Endothelial cell of umbilical vein (primary cell): ENCODE measurements at regions of chr19 and their contacts with region 1.

Region 1: GRCh38 chr19:55146078-55146704 is 2.8 kb downstream of the TNNT1 start:
- DNase-seq: no peak
- H3K4me3 ChIP-seq: no peak overlapping the region
- H3K27ac ChIP-seq: no peak overlapping the region
- H3K4me1 ChIP-seq: no peaks in the 10 kb centered on the region
- H3K27me3 ChIP-seq: peaks cover 7 to 15% of the 10 kb centered on the region in 2 experiments
- CTCF ChIP-seq: peak; percentile 34 to 55
- POLR2A ChIP-seq: no peak

Region 2: GRCh38 chr19:54905803-54906511 is 240.2 kb before region 1 on chr19 and contains the start of gene NCR1:
- CTCF ChIA-PET with region 1: no interaction called
- POLR2A ChIA-PET with region 1: no interaction called
- dilution Hi-C with region 1: no loop called
- intact Hi-C with region 1: no loop called
- DNase-seq: peak; percentile 37
- H3K4me3 ChIP-seq: no peak within 1 kb of the TSS
- H3K27ac ChIP-seq: no peak within 1 kb of the TSS
- H3K4me1 ChIP-seq: no peaks in the 10 kb centered on the region
- H3K27me3 ChIP-seq: no peaks in the 10 kb centered on the region
- CTCF ChIP-seq: no peak
- POLR2A ChIP-seq: no peak
- total RNA-seq, gene NCR1: 0.44 TPM in 1 of 2 replicates, not detected in the other

Region 3: GRCh38 chr19:55160128-55160985 is 14.2 kb after region 1 on chr19:
- CTCF ChIA-PET with region 1: interaction called, 64 read pairs
- POLR2A ChIA-PET with region 1: interaction called, 3 read pairs
- dilution Hi-C with region 1: no loop called
- intact Hi-C with region 1: loop called (anchors 1 kb)
- DNase-seq: peak; percentile 85
- H3K4me3 ChIP-seq: no peak overlapping the region
- H3K27ac ChIP-seq: no peak overlapping the region
- H3K4me1 ChIP-seq: no peaks in the 10 kb centered on the region
- H3K27me3 ChIP-seq: peaks cover 14 to 16% of the 10 kb centered on the region in 2 experiments
- CTCF ChIP-seq: peak; percentile 97 to 98
- POLR2A ChIP-seq: no peak

Region 4: DNA sequence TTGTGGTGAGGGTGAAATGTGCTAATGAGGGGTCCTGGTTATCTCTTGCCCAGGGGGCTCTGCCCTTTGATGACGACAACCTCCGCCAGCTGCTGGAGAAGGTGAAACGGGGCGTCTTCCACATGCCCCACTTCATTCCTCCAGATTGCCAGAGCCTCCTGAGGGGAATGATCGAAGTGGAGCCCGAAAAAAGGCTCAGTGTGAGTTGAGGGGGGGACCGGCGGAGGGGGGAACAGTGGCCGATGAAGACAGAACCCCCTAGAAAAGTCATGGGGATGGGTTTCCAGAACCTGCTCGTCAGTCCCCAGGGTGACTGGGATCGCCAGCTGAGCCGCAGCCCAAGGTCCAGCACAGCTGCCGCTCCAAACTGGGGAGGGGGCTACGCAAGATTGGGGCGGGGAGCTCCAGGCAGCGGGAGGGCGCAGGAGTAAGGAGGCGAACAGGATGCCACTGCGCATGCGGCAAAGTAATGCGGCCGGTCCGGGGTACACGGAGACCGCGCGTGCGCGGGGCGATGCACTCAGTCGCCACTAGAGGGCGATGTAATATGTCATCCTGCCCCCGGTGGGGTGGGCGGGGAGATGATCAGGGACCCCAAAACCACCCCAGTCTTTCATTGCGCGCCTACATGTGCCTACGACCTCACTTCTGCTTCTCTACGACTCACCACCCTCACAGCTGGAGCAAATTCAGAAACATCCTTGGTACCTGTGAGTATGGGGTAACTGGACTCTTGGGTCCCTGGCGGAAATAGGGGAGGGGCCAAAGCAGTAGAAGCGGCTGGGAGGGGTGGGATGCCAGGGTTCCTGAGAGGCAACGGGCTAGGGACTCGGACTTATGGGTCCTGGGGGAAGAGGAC is 155.5 kb after region 1 on chr19:
- CTCF ChIA-PET with region 1: interaction called, 8 read pairs
- POLR2A ChIA-PET with region 1: no interaction called
- dilution Hi-C with region 1: no loop called
- intact Hi-C with region 1: loop called (anchors 5 kb)
- DNase-seq: peak; percentile 81
- H3K4me3 ChIP-seq: peak overlapping the region in 2 of 3 experiments; percentile 26 to 28
- H3K27ac ChIP-seq: no peak overlapping the region
- H3K4me1 ChIP-seq: no peaks in the 10 kb centered on the region
- H3K27me3 ChIP-seq: peaks cover 0 to 3% of the 10 kb centered on the region in 2 experiments
- CTCF ChIP-seq: peak; percentile 89 to 95
- POLR2A ChIP-seq: no peak

Region 5: DNA sequence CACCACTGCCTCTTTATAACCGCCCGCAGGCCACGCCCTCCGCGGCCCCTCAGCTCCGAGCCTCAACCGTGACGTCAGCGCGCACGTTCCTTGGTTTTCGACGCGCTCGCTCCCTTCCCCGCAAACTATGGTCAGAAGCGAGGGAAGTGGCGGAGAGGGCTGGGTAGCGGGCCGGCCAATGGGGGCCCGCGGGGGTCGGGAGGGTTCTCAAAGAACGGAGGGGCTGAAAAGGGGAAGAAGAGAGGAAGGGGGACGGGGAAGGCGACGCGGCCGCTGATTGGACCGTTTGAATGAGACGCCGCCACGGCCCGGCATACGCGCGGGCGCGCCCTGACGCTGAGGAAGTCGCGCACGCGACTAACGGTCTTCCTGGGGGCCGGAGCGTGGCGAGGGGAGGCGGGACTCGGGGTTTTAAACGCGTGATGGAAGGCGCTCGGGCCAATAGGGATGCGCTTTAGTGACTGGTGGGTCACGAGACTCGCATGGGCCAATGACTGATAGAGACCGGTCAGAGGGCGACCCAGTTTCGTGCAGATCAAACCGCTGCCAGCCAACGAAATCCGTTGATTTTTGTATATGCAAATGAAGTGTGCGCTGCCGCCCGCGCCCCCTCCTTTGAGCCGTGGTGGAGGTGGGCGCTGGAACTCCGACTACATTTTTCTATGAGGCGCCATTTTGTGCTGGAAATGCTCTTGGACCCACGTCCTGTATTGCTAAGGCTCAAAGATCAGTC is 261.8 kb after region 1 on chr19:
- CTCF ChIA-PET with region 1: interaction called, 3 read pairs
- POLR2A ChIA-PET with region 1: no interaction called
- dilution Hi-C with region 1: no loop called
- intact Hi-C with region 1: loop called (anchors 2 kb)
- DNase-seq: peak; percentile 100
- H3K4me3 ChIP-seq: peak overlapping the region in 2 of 3 experiments; percentile 28 to 90
- H3K27ac ChIP-seq: peak overlapping the region; percentile 90
- H3K4me1 ChIP-seq: peaks cover 13% of the 10 kb centered on the region
- H3K27me3 ChIP-seq: peaks cover 2 to 5% of the 10 kb centered on the region in 2 experiments
- CTCF ChIP-seq: no peak
- POLR2A ChIP-seq: peak; percentile 58

Region 6: DNA sequence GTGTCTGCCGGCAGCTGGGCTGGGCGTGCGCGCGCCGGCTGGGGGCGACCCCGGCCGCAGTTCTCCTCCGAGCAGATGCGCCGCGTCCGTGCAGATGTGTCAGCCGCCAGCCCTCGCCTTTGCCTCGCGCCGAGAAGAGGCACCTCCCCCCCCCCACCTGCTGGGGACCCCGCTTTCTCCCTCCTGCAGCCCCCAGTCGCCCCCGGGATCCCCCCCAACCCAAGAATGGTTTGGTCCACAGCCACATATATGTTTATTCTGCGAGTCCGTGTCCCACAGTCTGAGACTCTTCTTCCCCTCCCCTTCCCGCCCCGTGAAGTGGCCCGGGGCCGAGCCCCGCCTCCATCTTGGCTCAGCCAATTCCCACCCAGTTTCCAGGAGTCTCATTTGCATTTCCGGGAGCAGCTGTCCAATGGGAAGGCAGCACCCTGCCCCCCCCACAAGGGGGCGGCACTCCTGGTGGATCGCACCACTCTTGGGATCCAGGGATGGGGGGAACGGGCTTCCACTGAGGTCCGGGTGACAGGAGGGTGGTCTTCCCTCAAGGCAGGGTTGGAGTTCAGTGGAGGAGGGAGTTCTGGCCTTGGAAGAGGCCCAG is 306.7 kb after region 1 on chr19:
- CTCF ChIA-PET with region 1: interaction called, 27 read pairs
- POLR2A ChIA-PET with region 1: no interaction called
- dilution Hi-C with region 1: no loop called
- intact Hi-C with region 1: loop called (anchors 1 kb)
- DNase-seq: peak; percentile 59
- H3K4me3 ChIP-seq: no peak overlapping the region
- H3K27ac ChIP-seq: no peak overlapping the region
- H3K4me1 ChIP-seq: no peaks in the 10 kb centered on the region
- H3K27me3 ChIP-seq: peaks cover 11 to 21% of the 10 kb centered on the region in 2 experiments
- CTCF ChIP-seq: no peak
- POLR2A ChIP-seq: no peak

Region 7: DNA sequence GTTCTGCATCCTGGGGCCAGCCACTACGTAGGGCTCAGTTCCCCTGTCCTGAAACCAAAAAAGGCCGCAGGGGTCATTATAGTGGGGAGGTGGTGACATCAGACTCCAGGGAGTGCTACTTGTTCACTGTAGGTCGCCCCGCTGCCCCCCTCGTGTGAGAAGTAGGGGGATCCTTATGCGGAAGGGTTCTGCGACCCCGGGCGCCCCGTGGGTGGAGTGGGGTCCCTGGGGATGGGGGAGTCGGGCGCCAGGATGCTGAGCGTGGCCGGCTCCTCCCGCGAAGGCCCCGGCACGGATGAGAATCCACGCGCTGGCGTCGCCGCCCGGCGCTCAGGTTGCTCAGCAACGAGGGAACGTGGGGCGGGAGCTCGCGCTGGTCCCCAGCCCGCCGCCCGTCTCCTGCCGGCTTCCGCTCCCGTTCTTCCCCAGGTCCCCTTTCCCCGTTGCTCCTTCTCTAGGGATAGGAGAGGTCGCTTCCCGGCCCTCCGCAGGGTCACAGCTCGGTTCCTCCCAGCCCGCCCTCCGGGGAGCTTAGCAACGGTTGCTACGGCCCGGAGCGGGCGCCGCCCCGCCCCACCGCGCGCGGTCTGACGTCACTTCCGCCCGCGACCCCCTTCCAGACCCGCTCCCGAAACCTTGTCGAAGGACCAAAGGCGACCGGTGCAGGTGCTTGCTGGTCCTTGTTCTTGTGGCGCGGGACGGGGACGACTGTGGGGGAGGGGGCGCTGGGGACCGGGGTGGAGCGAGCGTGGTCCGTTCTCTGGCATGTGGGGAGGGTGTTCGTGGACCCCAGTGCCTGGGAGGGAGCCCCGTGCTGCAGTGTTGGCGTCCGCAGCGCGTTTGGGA is 338.6 kb after region 1 on chr19 and contains the start of gene NAT14:
- CTCF ChIA-PET with region 1: interaction called, 17 read pairs
- POLR2A ChIA-PET with region 1: interaction called, 4 read pairs
- dilution Hi-C with region 1: no loop called
- intact Hi-C with region 1: no loop called
- DNase-seq: peak; percentile 61
- H3K4me3 ChIP-seq: peak within 1 kb of the TSS; percentile 32 to 63 (median 63)
- H3K27ac ChIP-seq: peak within 1 kb of the TSS; percentile 92
- H3K4me1 ChIP-seq: peaks cover 34% of the 10 kb centered on the region
- H3K27me3 ChIP-seq: no peaks in the 10 kb centered on the region
- CTCF ChIP-seq: no peak
- POLR2A ChIP-seq: no peak
- total RNA-seq, gene NAT14: 34.4 and 44.7 TPM in 2 replicates